Panc1 (cell line): ENCODE measurements at regions of chr5 and their contacts with region 1.

Region 1: DNA sequence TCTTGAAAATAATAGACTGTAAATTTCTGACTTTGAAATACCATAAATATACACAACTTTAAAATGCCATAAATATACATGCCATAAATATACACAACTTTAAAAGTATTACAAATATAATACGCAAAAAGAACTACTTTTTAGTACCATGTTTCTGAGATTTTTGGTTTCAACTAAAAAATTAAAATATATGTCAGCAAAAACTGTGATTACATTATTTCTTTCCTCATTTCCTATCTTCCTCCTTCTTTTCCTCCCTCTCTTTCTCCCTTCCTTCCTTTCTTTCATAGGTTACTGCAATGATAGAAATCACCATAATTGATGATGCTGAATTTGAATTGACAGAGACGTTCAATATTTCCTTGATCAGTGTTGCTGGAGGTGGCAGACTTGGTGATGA is 200.5 kb downstream of the ADGRV1 start:
- DNase-seq: no peak
- ATAC-seq: no peak
- H3K4me3 ChIP-seq: no peak overlapping the region
- H3K27ac ChIP-seq: no peak overlapping the region
- H3K4me1 ChIP-seq: no peaks in the 10 kb centered on the region
- H3K27me3 ChIP-seq: no peaks in the 10 kb centered on the region; the same call in 1 of the 2 replicates
- CTCF ChIP-seq: no peak

Region 2: DNA sequence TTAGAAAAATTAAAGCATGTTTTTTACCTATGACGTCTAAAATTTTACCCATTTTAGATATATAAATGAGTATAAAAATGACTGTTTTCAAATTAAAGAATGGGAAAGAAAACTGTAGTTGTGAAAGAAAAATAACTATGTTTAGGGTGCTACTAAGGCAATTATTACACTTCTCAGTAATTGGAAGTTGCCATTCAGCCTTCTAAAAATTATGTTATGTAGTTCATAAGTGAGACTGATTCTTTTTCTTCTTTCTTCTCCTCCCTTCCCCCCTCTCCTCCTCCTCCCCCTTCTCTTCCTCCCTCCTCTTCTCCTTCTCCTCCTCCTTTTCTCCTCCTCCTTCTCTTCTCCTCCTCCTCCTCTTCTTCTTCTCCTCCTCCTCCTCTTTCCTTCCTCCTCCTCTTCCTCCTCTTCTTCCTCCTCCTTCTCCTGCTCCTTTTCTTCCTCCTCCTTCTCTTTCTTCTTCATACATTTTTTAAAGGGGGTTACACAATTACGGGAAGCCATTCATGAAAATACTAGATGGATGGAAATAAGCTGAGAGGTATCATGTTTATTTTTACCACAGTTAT is 573.1 kb before region 1 on chr5:
- CTCF ChIA-PET with region 1: interaction called, 10 read pairs
- POLR2A ChIA-PET with region 1: no interaction called
- in situ Hi-C with region 1: no loop called
- intact Hi-C with region 1: no loop called
- DNase-seq: no peak
- ATAC-seq: no peak
- H3K4me3 ChIP-seq: no peak overlapping the region
- H3K27ac ChIP-seq: no peak overlapping the region
- H3K4me1 ChIP-seq: no peaks in the 10 kb centered on the region
- H3K27me3 ChIP-seq: no peaks in the 10 kb centered on the region
- CTCF ChIP-seq: no peak

Region 3: GRCh38 chr5:90802474-90803317 is 43.6 kb after region 1 on chr5:
- CTCF ChIA-PET with region 1: no interaction called
- POLR2A ChIA-PET with region 1: no interaction called
- in situ Hi-C with region 1: no loop called
- intact Hi-C with region 1: no loop called
- DNase-seq: peak; percentile 24
- ATAC-seq: peak; percentile 85
- H3K4me3 ChIP-seq: no peak overlapping the region
- H3K27ac ChIP-seq: no peak overlapping the region
- H3K4me1 ChIP-seq: no peaks in the 10 kb centered on the region
- H3K27me3 ChIP-seq: peaks cover 10% of the 10 kb centered on the region; the same call in 1 of the 2 replicates
- CTCF ChIP-seq: peak; percentile 85